ENCODE measurements at regions of chr19 and their contacts with region 1.

Region 1: DNA sequence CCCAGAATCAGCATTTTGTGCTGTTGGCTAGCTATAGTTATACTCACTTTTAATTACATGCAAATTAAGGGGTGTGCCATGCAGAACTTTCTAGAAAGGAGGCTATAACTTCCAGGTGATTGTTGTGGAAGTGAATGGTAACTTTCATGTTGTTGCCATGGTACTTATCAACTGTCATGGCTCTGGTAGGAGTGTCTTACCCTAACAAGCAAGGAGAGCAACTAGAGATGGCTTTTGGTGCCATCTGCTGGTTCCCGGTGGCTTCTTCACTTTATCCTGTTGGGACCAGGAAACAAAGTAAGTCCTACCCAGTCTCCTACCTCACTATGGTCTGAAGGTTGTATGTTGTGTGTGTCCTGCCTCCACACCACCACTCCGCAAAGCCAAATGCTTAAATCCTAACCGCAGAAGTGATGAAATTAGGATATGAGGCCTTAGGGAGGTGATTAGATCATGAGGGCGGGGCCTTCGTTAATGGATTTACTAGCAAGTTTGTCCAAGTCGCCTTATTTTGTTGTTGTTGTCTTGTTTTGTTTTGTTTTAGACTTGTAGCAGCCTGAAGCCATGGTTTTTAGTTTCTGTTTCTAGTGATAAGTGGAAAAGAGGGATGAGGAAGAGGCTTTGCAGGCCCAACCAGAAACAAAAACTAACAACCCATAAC is 22.6 kb downstream of the FBXL12 start:
- DNase-seq: peak; percentile 66 to 95 (median 87)
- ATAC-seq: peak; percentile 23
- H3K4me3 ChIP-seq: no peak overlapping the region
- H3K4me3 Mint-ChIP-seq: no peak overlapping the region
- H3K27ac ChIP-seq: peak overlapping the region; percentile 64 to 80
- H3K27ac Mint-ChIP-seq: peak overlapping the region; percentile 64
- H3K4me1 ChIP-seq: peaks cover 22% of the 10 kb centered on the region
- H3K4me1 Mint-ChIP-seq: peaks cover 27% of the 10 kb centered on the region
- H3K27me3 ChIP-seq: no peaks in the 10 kb centered on the region
- H3K27me3 Mint-ChIP-seq: no peaks in the 10 kb centered on the region
- CTCF ChIP-seq: peak; percentile 67

Region 2: DNA sequence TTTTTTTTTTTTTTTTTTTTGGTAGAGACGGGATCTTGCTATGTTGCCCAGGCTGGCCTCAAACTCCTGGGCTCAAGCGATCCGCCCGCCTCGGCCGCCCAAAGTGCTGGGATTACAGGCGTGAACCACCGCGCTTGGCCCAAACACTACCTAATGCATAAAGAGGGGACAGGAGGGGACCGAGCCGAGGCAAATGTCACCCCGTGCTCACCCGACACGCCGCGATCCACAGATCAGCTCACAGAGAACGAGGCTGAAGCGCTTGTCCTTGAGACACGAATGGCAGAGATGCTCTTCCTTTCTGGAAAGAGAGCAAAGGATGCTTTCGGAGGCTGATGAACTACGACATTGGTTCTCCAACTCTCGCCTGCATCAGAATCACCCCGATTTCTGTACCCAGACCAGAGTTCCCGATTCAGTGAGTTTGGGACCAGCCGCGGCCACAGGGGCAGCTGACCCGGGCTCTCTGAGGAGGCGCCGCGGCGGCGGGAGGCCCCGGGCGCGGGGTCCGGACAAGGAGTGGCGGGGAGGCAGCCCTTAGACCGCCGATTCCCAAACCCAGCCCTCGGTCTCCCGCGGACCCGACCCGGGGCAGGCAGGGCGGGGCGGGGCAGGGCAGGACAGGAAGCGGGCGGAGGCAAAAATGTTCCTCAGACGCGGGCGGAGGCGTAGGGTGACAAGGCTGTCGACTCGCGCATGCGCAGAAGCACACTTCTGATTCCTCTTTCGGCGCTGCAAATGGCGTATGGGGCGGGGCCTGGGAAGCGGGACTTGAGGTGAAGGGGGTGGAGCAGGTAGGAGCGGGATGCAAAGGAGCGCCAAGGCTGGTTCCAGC is 486.9 kb before region 1 on chr19 and contains the start of gene ZNF699:
- CTCF ChIA-PET with region 1: interaction called, 5 read pairs
- POLR2A ChIA-PET with region 1: no interaction called
- intact Hi-C with region 1: loop called in 1 of 2 experiments (anchors 5 kb)
- DNase-seq: peak; percentile 96 to 99 (median 98)
- ATAC-seq: peak; percentile 90
- H3K4me3 ChIP-seq: peak within 1 kb of the TSS; percentile 86 to 100
- H3K4me3 Mint-ChIP-seq: peak within 1 kb of the TSS; percentile 94
- H3K27ac ChIP-seq: peak within 1 kb of the TSS; percentile 86
- H3K27ac Mint-ChIP-seq: peak within 1 kb of the TSS; percentile 96
- H3K4me1 ChIP-seq: peaks cover 13% of the 10 kb centered on the region
- H3K4me1 Mint-ChIP-seq: peaks cover 34% of the 10 kb centered on the region
- H3K27me3 ChIP-seq: no peaks in the 10 kb centered on the region
- H3K27me3 Mint-ChIP-seq: no peaks in the 10 kb centered on the region
- CTCF ChIP-seq: no peak
- total RNA-seq, gene ZNF699: 15.1 to 16.0 TPM

Region 3: GRCh38 chr19:9435279-9436268 is 360.7 kb before region 1 on chr19 and contains the start of gene ZNF266:
- CTCF ChIA-PET with region 1: interaction called, 3 read pairs
- POLR2A ChIA-PET with region 1: no interaction called
- intact Hi-C with region 1: loop called (anchors 1 to 10 kb)
- DNase-seq: peak; percentile 87 to 97 (median 93)
- ATAC-seq: peak; percentile 87
- H3K4me3 ChIP-seq: peak within 1 kb of the TSS; percentile 80 to 95
- H3K4me3 Mint-ChIP-seq: peak within 1 kb of the TSS; percentile 93
- H3K27ac ChIP-seq: peak within 1 kb of the TSS; percentile 81 to 98
- H3K27ac Mint-ChIP-seq: peak within 1 kb of the TSS; percentile 98
- H3K4me1 ChIP-seq: peaks cover 31% of the 10 kb centered on the region
- H3K4me1 Mint-ChIP-seq: peaks cover 56% of the 10 kb centered on the region
- H3K27me3 ChIP-seq: no peaks in the 10 kb centered on the region
- H3K27me3 Mint-ChIP-seq: no peaks in the 10 kb centered on the region
- CTCF ChIP-seq: peak; percentile 67
- total RNA-seq, gene ZNF266: 62.2 to 65.3 TPM

Region 4: GRCh38 chr19:9621156-9622037 is 174.8 kb before region 1 on chr19 and contains the start of gene ZNF561:
- CTCF ChIA-PET with region 1: interaction called, 35 read pairs
- POLR2A ChIA-PET with region 1: interaction called, 5 read pairs
- intact Hi-C with region 1: loop called (anchors 1 kb)
- DNase-seq: peak; percentile 77 to 97 (median 91)
- ATAC-seq: peak; percentile 85
- H3K4me3 ChIP-seq: peak within 1 kb of the TSS; percentile 81 to 97
- H3K4me3 Mint-ChIP-seq: peak within 1 kb of the TSS; percentile 95
- H3K27ac ChIP-seq: peak within 1 kb of the TSS; percentile 91 to 94
- H3K27ac Mint-ChIP-seq: peak within 1 kb of the TSS; percentile 99
- H3K4me1 ChIP-seq: peaks cover 15% of the 10 kb centered on the region
- H3K4me1 Mint-ChIP-seq: peaks cover 27% of the 10 kb centered on the region
- H3K27me3 ChIP-seq: no peaks in the 10 kb centered on the region
- H3K27me3 Mint-ChIP-seq: no peaks in the 10 kb centered on the region
- CTCF ChIP-seq: no peak
- total RNA-seq, gene ZNF561: 35.5 to 39.8 TPM

Region 5: DNA sequence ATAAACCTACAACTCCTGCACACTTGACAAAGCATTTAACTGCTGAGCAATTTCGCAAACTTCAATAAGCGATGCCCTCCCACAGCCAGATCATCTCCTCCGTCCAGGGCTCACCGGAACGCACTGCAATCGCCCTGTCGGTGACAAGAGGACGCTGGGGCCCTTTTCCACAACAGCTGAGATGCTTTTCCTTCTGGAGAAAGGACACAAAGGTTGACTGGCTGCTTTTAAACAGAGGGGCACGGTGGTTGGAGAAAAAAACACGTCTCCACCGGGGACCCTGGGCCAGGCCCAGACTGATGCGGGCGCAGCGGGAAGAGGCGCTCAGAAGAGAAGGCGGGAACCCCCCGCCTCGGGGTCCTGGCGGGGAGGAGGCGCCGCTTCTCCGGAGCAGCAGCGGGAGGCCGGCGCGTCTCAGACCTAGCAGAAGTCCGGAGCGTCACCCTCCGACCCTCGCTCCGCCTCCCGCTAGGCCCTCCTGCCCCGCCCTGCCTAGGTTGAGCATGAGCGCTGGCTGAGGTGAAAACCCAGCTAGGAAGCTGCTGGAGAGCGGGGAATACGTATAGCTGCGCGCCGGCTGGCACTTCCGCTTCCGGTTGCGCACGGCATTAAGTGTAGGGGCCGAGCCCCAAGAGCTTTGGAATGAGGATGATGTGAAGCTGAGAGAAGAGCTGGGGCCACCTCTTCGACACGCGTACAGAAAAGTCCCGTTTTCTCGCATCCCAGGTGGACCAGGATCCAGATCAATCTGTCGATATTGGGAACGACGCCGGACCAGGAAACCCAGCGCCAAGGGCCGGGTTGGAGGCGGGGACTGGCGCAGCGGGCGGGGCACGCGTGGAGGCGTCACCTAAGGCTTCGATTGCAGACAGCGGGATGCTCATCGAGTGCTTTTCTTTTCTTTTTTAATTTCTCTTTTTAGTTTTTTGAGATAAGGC is 27.8 kb before region 1 on chr19 and contains the start of gene ZNF846:
- CTCF ChIA-PET with region 1: interaction called, 6 read pairs
- POLR2A ChIA-PET with region 1: interaction called, 4 read pairs
- intact Hi-C with region 1: loop called (anchors 1 kb)
- DNase-seq: peak; percentile 83 to 96 (median 93)
- ATAC-seq: peak; percentile 95
- H3K4me3 ChIP-seq: peak within 1 kb of the TSS; percentile 94 to 96
- H3K4me3 Mint-ChIP-seq: peak within 1 kb of the TSS; percentile 97
- H3K27ac ChIP-seq: peak within 1 kb of the TSS; percentile 87 to 99
- H3K27ac Mint-ChIP-seq: peak within 1 kb of the TSS; percentile 99
- H3K4me1 ChIP-seq: peaks cover 8% of the 10 kb centered on the region
- H3K4me1 Mint-ChIP-seq: peaks cover 16% of the 10 kb centered on the region
- H3K27me3 ChIP-seq: no peaks in the 10 kb centered on the region
- H3K27me3 Mint-ChIP-seq: no peaks in the 10 kb centered on the region
- CTCF ChIP-seq: no peak
- total RNA-seq, gene ZNF846: 6.4 to 8.2 TPM

Region 6: DNA sequence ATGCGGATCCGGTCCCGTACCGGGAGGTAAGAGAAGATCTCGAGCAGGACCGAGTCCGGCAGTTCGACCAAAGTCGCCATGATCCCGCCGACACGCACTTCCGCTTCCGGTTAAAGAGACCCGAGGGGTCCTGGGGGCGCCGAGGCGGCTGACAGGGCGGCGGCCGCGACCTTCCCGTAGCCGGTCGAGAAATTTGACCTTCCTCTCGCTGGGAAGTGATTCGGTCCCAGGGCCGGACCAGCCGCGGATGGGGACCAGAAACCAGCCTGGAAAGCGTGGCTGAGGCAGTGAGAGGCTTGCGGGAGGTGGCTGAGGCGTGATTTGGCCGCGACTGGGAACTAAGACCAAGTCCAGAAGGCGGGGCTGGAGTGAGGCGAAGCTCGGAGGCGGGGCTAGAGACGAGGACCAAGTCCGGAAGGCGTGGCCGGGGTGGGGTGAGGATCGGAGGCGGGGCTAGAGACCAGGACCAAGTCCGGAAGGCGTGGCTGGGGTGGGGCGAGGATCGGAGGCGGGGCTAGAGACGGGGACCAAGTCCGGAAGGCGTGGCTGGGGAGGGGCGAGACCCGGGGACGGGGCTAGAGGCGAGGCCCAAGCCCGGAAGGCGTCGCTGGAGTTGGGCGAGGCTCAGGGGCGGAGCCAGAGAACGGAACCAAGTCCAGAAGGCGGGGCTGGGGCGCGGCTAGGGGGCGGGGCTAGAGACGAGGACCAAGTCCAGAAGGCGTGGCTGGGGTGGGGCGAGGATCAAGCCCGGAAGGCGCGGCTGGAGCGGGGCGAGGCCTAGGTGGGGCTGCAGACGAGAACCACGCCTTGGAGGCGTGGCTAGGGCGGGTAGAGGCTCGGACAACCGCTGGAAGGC is 22.7 kb after region 1 on chr19 and contains the start of gene FBXL12:
- CTCF ChIA-PET with region 1: interaction called, 4 read pairs
- POLR2A ChIA-PET with region 1: interaction called, 4 read pairs
- intact Hi-C with region 1: loop called (anchors 1 kb)
- DNase-seq: peak; percentile 100
- ATAC-seq: peak; percentile 89
- H3K4me3 ChIP-seq: peak within 1 kb of the TSS; percentile 97 to 100
- H3K4me3 Mint-ChIP-seq: peak within 1 kb of the TSS; percentile 88
- H3K27ac ChIP-seq: peak within 1 kb of the TSS; percentile 98 to 99
- H3K27ac Mint-ChIP-seq: peak within 1 kb of the TSS; percentile 93
- H3K4me1 ChIP-seq: peaks cover 18% of the 10 kb centered on the region
- H3K4me1 Mint-ChIP-seq: peaks cover 38% of the 10 kb centered on the region
- H3K27me3 ChIP-seq: no peaks in the 10 kb centered on the region
- H3K27me3 Mint-ChIP-seq: no peaks in the 10 kb centered on the region
- CTCF ChIP-seq: no peak
- total RNA-seq, gene FBXL12: 38.9 to 41.3 TPM

Region 7: DNA sequence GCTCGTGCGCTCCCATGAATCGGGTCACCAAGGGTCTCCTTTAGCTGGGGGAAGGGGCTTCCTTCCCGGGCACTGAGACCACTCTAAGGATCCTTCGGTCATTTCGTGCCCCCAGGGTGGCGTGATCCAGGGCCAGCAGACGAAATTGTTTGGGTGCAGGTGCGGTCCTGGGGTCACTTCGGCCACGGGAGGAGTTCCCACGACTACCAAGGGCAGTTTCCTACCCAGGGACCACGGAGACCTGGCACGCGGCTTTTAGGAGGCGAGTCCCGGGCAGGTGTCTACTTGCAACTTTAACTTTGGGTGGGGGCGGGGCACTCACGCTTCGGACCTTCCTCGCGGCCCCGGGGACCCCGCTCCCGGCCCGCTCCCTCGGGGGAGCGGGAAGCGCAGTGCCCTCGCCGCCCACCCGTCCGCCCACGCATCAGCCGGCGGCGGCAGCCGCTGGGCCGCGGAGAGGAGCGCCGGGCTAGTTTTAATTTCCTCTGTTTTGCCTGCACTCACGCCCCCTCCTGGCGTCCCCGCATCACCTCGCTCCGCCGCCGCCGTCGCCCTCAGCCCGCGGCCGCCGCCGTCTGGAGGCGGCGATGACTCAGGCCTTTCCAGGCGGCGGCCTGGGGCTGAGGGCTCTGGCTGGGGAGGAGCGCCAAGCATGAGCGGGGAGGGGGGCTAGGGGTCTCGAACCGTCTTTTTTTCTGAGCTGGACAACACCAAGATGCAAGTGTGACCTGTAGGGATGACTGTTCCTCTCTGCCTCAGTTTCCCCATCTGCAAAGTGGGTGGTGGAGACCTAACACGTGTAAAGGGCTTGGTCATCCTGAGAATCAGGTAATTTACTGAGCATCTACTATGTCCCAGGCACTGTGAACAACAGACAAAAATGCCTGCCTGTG is 118.3 kb after region 1 on chr19:
- CTCF ChIA-PET with region 1: no interaction called
- POLR2A ChIA-PET with region 1: no interaction called
- intact Hi-C with region 1: loop called in 1 of 2 experiments (anchors 1 kb)
- DNase-seq: peak; percentile 69 to 89 (median 81)
- ATAC-seq: peak; percentile 92
- H3K4me3 ChIP-seq: peak overlapping the region; percentile 49 to 66
- H3K4me3 Mint-ChIP-seq: peak overlapping the region; percentile 73
- H3K27ac ChIP-seq: no peak overlapping the region
- H3K27ac Mint-ChIP-seq: no peak overlapping the region
- H3K4me1 ChIP-seq: peaks cover 15% of the 10 kb centered on the region
- H3K4me1 Mint-ChIP-seq: peaks cover 8% of the 10 kb centered on the region
- H3K27me3 ChIP-seq: peaks cover 0 to 15% of the 10 kb centered on the region in 2 experiments
- H3K27me3 Mint-ChIP-seq: peaks cover 30% of the 10 kb centered on the region
- CTCF ChIP-seq: peak; percentile 73

Measured in CD8-positive, alpha-beta T cell (primary cell).